CD14-positive monocyte (primary cell): ENCODE measurements at regions of chr3 and their contacts with region 1.

Region 1: DNA sequence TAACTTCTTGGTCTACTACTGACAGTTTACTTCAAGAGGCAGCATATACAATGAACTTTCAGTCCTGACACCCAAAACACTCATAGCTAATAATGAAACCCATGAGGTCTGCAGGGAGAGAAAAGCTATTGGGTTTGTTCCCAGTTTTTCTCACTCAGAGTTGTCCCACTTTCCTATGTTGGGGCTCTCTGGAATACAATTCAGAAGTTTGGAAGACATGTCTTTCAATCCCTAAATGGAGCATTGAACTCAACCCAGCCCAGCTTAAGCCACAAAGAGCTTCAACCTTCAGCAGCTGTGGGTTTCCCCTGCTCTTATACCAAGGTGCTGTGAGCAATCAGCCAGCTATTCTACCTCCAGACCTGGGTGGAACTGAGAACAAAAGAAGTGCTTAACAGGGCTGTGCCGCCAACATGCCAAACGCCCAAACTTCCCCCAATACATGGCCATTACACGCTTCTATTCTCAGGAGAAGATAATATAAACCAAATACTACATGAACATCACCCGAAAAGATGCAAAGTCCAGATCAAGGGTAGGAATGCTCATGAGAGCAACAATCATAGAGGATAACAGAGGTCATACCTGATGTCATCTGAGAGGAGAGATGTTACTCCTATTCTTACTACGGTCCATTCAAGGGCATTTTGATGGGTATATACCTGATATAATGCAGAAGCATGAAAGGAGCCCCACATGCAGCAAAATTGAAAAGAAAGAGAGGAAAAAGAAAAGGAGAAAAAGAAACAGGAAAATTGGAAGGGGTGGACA is 131.2 kb upstream of the TGFBR2 start:
- DNase-seq: no peak
- H3K4me3 ChIP-seq: no peak overlapping the region
- H3K4me3 Mint-ChIP-seq: no peak overlapping the region
- H3K27ac ChIP-seq: no peak overlapping the region
- H3K27ac Mint-ChIP-seq: peak overlapping the region in 3 of 7 donors; percentile 21 to 72 (median 23)
- H3K4me1 ChIP-seq: peaks cover 59 to 66% of the 10 kb centered on the region in 2 donors
- H3K4me1 Mint-ChIP-seq: peaks cover 64% of the 10 kb centered on the region
- H3K27me3 ChIP-seq: no peaks in the 10 kb centered on the region
- H3K27me3 Mint-ChIP-seq: no peaks in the 10 kb centered on the region
- CTCF ChIP-seq: no peak

Region 2: DNA sequence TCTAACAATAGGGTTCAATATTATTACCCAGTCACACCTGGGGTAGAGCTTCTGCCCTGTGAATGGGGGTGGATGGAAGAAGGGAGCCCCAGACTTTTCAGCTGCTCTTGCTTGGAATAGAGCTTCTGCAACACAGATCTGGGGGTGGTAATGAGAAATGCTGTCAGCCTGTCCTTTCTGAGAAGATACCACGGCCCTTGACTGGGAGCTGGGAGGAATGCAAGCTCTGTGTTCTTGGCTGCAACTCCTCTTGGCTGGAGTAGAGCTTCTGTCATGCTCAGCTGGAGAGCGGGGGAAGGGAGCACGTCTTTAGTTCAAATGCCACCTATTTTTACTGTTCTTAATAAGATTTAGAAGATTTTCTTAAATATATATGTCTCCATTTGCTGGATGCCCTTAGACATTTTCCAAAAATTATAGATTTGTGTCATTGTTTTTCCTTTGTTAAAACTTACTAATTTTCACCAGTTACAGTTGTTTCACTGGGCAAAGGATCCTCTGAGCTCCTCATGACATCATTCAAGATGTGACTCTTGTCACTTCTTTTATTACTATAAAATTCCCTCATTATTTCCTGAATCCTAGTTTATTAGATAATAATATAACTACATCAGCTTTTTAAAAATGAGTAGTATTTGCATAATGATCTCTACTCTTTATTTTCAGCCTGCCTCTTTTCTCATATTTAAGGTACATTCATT is 48.8 kb before region 1 on chr3:
- intact Hi-C with region 1: loop called in 1 of 2 experiments (anchors 10 kb)
- DNase-seq: no peak
- H3K4me3 ChIP-seq: no peak overlapping the region
- H3K4me3 Mint-ChIP-seq: no peak overlapping the region
- H3K27ac ChIP-seq: no peak overlapping the region
- H3K27ac Mint-ChIP-seq: peak overlapping the region in 1 of 7 donors; percentile 63
- H3K4me1 ChIP-seq: peaks cover 5 to 9% of the 10 kb centered on the region in 2 donors
- H3K4me1 Mint-ChIP-seq: peaks cover 7% of the 10 kb centered on the region
- H3K27me3 ChIP-seq: no peaks in the 10 kb centered on the region
- H3K27me3 Mint-ChIP-seq: no peaks in the 10 kb centered on the region
- CTCF ChIP-seq: no peak